ENCODE measurements at regions of chr3 and their contacts with region 1.

Region 1: DNA sequence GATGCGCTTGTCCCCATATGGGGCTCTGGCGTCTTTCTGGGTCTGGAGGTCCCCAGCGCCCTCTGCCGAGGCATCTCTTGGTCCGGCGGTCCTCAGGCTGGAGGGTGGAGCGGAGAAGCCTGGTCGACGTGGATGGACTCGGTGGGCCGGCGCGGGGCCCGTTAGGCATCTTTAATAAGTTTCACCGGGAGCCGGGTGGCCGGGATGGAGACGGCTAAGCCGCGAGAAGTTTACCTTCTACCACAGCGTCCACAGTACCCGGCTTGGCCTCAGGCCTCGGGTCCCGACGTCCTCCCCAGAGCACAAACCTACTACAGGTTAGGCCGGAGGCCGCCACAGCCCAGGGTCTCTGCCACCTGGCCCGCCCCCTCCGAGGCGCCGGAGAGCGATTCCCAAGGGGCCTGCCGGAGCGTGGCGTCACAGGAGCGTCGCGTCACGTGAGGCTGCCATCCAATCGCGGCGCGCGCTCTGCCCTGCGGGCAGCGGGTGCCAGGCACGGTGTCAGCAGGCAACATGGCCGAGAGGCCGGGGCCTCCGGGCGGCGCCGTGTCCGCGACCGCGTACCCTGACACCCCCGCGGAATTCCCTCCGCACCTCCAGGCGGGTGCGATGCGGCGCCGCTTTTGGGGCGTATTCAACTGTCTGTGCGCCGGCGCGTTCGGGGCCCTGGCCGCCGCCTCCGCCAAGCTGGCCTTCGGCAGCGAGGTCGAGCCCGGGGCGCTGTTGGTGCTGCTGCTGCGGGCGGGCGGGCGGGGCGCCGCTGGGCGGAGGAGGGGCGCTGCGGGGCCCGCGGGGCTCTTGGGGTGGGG is at the start of gene TMEM42:
- DNase-seq: peak; percentile 88 to 97 (median 91)
- H3K4me3 ChIP-seq: peak within 1 kb of the TSS; percentile 55 to 98 (median 83)
- H3K27ac ChIP-seq: peak within 1 kb of the TSS; percentile 82 to 98 (median 94)
- H3K27me3 ChIP-seq: no peaks in the 10 kb centered on the region
- CTCF ChIP-seq: peak in 40 of 56 donors; percentile 2 to 50 (median 28)
- total RNA-seq, gene TMEM42: 13.8 to 39.0 (median 21.6) TPM

Region 2: DNA sequence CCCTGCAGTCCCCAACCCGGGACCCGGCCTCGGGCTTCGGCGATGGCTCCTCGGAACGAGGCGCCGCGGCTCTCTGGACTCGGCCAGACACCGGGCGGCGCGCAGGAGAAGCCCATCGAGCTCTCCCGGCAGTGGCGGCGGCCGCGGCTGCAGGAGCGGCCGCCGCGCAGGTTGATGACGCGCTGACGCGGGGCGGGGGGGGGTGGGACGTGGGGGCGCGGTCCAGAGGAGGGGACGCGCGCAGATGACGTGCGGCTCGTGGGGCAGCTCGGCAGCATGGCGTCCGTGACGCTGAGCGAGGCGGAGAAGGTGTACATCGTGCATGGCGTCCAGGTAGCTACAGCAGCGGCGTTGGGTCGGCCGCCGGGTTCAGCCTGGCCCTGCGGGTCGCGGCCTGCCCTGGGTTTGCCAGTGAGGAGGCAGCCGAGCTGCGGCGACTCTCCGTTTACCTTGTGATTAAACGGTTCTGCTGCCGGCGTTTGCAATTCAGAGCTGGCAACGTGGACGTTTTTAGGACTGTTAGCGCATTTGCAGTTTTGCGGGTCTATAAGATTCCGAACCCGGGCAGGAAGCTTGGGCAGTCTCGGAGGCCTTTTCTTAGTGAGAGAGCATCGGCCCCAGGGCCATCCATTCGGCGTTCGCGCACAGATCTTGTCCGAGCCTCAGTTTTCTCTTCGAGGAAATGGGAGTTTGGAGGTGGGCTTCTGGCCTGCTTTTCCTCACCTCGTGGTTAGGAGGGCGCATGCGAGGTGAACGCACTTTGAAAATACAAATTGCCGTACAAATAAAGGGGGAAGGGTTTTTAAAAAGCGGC is 114.6 kb after region 1 on chr3 and contains the starts of genes EXOSC7 and ZDHHC3:
- intact Hi-C with region 1: loop called in 1 of 2 experiments (anchors 5 kb)
- DNase-seq: peak; percentile 78 to 90 (median 86)
- H3K4me3 ChIP-seq: peak within 1 kb of the TSS; percentile 65 to 100 (median 94)
- H3K27ac ChIP-seq: peak within 1 kb of the TSS in 50 of 59 donors; percentile 37 to 92 (median 72)
- H3K27me3 ChIP-seq: no peaks in the 10 kb centered on the region
- CTCF ChIP-seq: peak in 33 of 56 donors; percentile 7 to 60 (median 26)
- total RNA-seq, gene EXOSC7: 25.6 to 46.6 (median 33.5) TPM
- total RNA-seq, gene ZDHHC3: 41.3 to 77.7 (median 54.1) TPM

Measured in dorsolateral prefrontal cortex (tissue), 120 donors.